ENCODE measurements at regions of chr18 and their contacts with region 1.

Region 1: DNA sequence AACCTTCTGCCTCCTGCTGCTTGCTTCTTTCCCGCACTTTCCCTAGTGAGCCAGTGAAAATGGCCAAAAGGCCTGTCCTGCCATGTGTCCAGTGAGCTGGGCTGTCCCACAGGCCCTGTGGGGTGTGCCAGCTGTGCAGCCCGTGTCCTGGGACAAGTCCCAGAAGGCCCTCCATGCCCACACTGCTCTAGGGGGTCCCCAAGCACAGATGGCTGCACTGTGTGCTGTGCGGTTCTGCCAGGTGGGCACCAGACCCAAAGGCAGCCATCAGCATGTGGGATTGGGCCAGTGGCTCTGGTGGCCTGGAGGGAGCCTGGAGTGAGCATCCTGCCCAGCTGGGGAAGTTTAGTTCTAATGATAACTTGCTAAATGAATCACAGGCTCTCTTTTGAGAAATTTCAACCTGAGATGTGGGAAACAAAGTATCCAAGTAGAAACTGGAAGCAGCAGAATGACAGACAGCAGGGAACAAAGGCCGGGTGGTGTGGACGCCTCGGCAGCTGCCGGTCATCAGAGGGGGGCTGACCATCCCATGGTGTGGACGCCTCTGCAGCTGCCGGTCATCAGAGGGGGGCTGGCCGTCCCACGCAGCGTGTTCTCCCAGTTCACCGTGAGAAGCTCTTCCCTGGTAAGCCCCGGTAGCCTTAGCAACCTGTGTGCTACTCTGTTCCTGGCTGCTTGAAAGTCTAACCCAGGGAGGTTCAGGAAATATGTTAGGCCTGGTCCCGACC is 9.9 kb upstream of the CNDP2 start:
- DNase-seq: no peak
- H3K4me3 ChIP-seq: no peak overlapping the region
- H3K4me3 Mint-ChIP-seq: no peak overlapping the region
- H3K27ac ChIP-seq: no peak overlapping the region
- H3K27ac Mint-ChIP-seq: peak overlapping the region in 1 of 7 donors; percentile 68
- H3K4me1 ChIP-seq: peaks cover 6% of the 10 kb centered on the region
- H3K4me1 Mint-ChIP-seq: peaks cover 6 to 13% (median 8%) of the 10 kb centered on the region in 4 donors
- H3K27me3 ChIP-seq: no peaks in the 10 kb centered on the region
- H3K27me3 Mint-ChIP-seq: peaks cover 0 to 3% of the 10 kb centered on the region in 2 donors

Region 2: GRCh38 chr18:74303936-74304335 is 182.3 kb before region 1 on chr18:
- CTCF ChIA-PET with region 1: no interaction called
- POLR2A ChIA-PET with region 1: no interaction called
- intact Hi-C with region 1: no loop called
- DNase-seq: no peak
- H3K4me3 ChIP-seq: no peak overlapping the region
- H3K4me3 Mint-ChIP-seq: no peak overlapping the region
- H3K27ac ChIP-seq: no peak overlapping the region
- H3K27ac Mint-ChIP-seq: no peak overlapping the region
- H3K4me1 ChIP-seq: no peaks in the 10 kb centered on the region
- H3K4me1 Mint-ChIP-seq: no peaks in the 10 kb centered on the region
- H3K27me3 ChIP-seq: no peaks in the 10 kb centered on the region
- H3K27me3 Mint-ChIP-seq: peaks cover 17 to 26% of the 10 kb centered on the region in 2 donors

Region 3: DNA sequence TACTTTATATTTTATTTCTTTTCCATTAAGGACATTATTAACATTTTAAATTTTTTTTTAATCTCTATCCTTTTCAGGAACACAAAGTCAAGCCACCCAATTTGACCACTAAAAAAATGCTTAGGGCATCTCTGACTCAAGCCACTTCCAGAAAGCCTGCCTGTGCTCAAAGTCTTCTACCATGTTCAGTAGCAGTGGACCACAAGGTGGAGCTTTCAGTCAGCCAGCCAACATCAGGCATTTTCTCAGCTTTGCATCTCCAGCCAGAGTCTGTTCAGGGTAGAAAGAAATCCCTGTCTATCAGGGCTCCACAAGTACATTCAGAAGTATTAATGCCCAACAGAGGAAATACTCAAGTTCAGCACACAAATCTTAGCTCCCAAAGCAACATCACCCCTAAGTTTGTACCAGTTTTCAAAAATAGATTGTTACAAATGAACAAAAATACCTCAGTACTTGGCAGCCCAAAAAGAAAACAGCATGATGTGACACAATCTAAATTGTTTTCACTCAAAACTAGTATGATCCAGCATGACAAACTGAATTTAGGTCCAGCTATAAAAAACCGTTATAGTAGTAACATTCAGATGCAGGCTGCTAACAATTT is 133.0 kb before region 1 on chr18:
- CTCF ChIA-PET with region 1: interaction called, 422 read pairs
- POLR2A ChIA-PET with region 1: no interaction called
- intact Hi-C with region 1: no loop called
- DNase-seq: peak; percentile 66 to 69 (median 67)
- H3K4me3 ChIP-seq: no peak overlapping the region
- H3K4me3 Mint-ChIP-seq: no peak overlapping the region
- H3K27ac ChIP-seq: no peak overlapping the region
- H3K27ac Mint-ChIP-seq: peak overlapping the region in 2 of 7 donors; percentile 11 to 58
- H3K4me1 ChIP-seq: peaks cover 9% of the 10 kb centered on the region
- H3K4me1 Mint-ChIP-seq: peaks cover 0 to 7% (median 5%) of the 10 kb centered on the region in 4 donors
- H3K27me3 ChIP-seq: no peaks in the 10 kb centered on the region
- H3K27me3 Mint-ChIP-seq: peaks cover 0 to 9% of the 10 kb centered on the region in 2 donors

Measured in CD4-positive, alpha-beta memory T cell (primary cell).